HepG2 (cell line): ENCODE measurements at regions of chr7 and their contacts with region 1.

Region 1: GRCh38 chr7:101390901-101391301 is 28.2 kb downstream of the COL26A1 start:
- DNase-seq: peak; percentile 91
- ATAC-seq: peak; percentile 88
- H3K4me3 ChIP-seq: peak overlapping the region in 1 of 3 experiments; percentile 38; a peak in 2 of 6 replicates
- H3K27ac ChIP-seq: peak overlapping the region; percentile 78
- H3K4me1 ChIP-seq: peaks cover 60% of the 10 kb centered on the region
- H3K27me3 ChIP-seq: no peaks in the 10 kb centered on the region
- CTCF ChIP-seq: peak; percentile 31; the same call in 1 of the 2 replicates
- EP300 ChIP-seq: peak in 1 of 2 experiments; percentile 82; a peak in 2 of 4 replicates
- POLR2A ChIP-seq: no peak
- RAD21 ChIP-seq: no peak

Region 2: GRCh38 chr7:101410743-101411507 is 20.0 kb after region 1 on chr7:
- CTCF ChIA-PET with region 1: no interaction called
- POLR2A ChIA-PET with region 1: no interaction called
- in situ Hi-C with region 1: no loop called
- intact Hi-C with region 1: loop called (anchors 1 kb)
- DNase-seq: peak; percentile 41
- ATAC-seq: peak; percentile 91
- H3K4me3 ChIP-seq: peak overlapping the region in 1 of 3 experiments; percentile 19; a peak in 1 of 6 replicates
- H3K27ac ChIP-seq: no peak overlapping the region
- H3K4me1 ChIP-seq: peaks cover 14% of the 10 kb centered on the region
- H3K27me3 ChIP-seq: no peaks in the 10 kb centered on the region
- CTCF ChIP-seq: peak; percentile 98
- EP300 ChIP-seq: no peak
- POLR2A ChIP-seq: no peak
- RAD21 ChIP-seq: peak; percentile 88